IMR-90 (cell line): ENCODE measurements at regions of chr22 and their contacts with region 1.

Region 1: DNA sequence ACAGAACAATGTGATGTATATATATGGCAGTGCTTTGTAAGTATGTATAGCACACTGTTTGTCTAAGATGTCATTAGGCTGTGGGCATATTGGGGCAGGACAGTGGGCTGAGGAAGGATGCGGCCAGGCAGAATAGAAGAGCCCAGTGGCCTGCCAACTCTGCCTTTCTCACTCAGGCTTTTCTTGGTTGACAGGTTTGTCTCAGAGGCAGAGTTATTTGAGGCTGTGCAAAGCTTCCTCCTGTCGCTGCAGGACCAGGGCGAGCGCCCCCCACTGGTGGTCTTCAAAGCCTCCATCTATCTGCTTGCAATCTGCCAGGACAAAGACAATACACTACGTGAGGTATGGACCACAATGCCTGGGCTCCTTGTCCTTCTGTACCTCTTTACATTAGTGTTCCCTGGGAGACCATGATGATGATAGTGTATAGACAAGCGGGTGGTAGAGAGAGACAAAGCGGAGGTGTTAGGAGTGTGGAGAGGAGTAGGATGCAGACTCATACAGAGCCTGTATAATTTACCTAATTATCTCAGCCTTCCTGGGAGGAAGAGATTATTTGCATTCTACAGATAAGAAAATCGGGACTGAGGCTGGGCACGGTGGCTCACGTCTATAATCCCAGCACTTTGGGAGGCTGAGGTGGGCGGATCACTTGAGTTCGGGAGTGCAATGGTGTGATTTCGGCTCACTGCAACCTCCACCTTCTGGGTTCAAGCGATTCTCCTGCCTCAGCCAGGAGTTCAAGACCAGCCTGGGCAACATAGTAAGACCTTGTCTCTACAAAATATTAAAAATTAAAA is 37.3 kb upstream of the CCDC134 start:
- DNase-seq: no peak
- ATAC-seq: peak; percentile 11; the same call in 1 of the 2 replicates
- H3K4me3 ChIP-seq: no peak overlapping the region
- H3K27ac ChIP-seq: no peak overlapping the region
- H3K4me1 ChIP-seq: no peaks in the 10 kb centered on the region
- H3K27me3 ChIP-seq: peaks cover 2% of the 10 kb centered on the region
- CTCF ChIP-seq: peak; percentile 18; the same call in 1 of the 2 replicates
- POLR2A ChIP-seq: no peak
- RAD21 ChIP-seq: no peak

Region 2: DNA sequence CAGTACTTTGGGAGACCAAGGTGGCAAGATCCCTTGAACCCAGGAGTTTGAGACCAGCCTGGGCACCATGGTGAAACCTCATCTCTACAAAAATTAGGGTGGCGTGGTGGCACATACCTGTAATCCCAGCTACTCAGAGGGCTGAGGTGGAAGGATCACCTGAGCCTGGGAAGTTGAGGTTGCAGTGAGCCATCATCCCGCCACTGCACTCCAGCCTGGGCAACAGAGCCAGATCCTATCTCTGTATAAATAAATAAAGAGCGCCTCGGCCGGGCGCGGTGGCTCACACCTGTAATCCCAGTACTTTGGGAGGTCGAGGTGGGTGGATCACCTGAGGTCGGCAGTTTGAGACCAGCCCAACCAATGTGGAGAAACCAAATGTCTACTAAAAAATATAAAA is 344.4 kb before region 1 on chr22:
- CTCF ChIA-PET with region 1: no interaction called
- POLR2A ChIA-PET with region 1: interaction called, 10 read pairs
- dilution Hi-C with region 1: no loop called
- in situ Hi-C with region 1: no loop called
- intact Hi-C with region 1: no loop called
- DNase-seq: no peak
- ATAC-seq: no peak
- H3K4me3 ChIP-seq: no peak overlapping the region
- H3K27ac ChIP-seq: no peak overlapping the region
- H3K4me1 ChIP-seq: peaks cover 7% of the 10 kb centered on the region
- H3K27me3 ChIP-seq: no peaks in the 10 kb centered on the region
- CTCF ChIP-seq: no peak
- POLR2A ChIP-seq: no peak
- RAD21 ChIP-seq: no peak